ENCODE measurements at regions of chr3 and their contacts with region 1.

Region 1: GRCh38 chr3:196047391-196048030 is 34.4 kb downstream of the TFRC start:
- DNase-seq: no peak
- ATAC-seq: no peak
- H3K4me3 ChIP-seq: no peak overlapping the region
- H3K27ac ChIP-seq: no peak overlapping the region
- H3K4me1 ChIP-seq: no peaks in the 10 kb centered on the region
- H3K27me3 ChIP-seq: no peaks in the 10 kb centered on the region
- CTCF ChIP-seq: no peak

Region 2: GRCh38 chr3:195558602-195559001 is 488.9 kb before region 1 on chr3:
- CTCF ChIA-PET with region 1: no interaction called
- POLR2A ChIA-PET with region 1: no interaction called
- in situ Hi-C with region 1: no loop called
- intact Hi-C with region 1: no loop called
- DNase-seq: no peak
- ATAC-seq: peak; percentile 82
- H3K4me3 ChIP-seq: no peak overlapping the region
- H3K27ac ChIP-seq: no peak overlapping the region
- H3K4me1 ChIP-seq: peaks cover 4% of the 10 kb centered on the region; the same call in 1 of the 2 replicates
- H3K27me3 ChIP-seq: no peaks in the 10 kb centered on the region
- CTCF ChIP-seq: peak; percentile 78

Region 3: GRCh38 chr3:196063456-196063855 is 15.9 kb after region 1 on chr3:
- CTCF ChIA-PET with region 1: no interaction called
- POLR2A ChIA-PET with region 1: interaction called, 12 read pairs
- in situ Hi-C with region 1: no loop called
- intact Hi-C with region 1: no loop called
- DNase-seq: no peak
- ATAC-seq: no peak
- H3K4me3 ChIP-seq: no peak overlapping the region
- H3K27ac ChIP-seq: no peak overlapping the region
- H3K4me1 ChIP-seq: no peaks in the 10 kb centered on the region
- H3K27me3 ChIP-seq: no peaks in the 10 kb centered on the region
- CTCF ChIP-seq: no peak

Region 4: DNA sequence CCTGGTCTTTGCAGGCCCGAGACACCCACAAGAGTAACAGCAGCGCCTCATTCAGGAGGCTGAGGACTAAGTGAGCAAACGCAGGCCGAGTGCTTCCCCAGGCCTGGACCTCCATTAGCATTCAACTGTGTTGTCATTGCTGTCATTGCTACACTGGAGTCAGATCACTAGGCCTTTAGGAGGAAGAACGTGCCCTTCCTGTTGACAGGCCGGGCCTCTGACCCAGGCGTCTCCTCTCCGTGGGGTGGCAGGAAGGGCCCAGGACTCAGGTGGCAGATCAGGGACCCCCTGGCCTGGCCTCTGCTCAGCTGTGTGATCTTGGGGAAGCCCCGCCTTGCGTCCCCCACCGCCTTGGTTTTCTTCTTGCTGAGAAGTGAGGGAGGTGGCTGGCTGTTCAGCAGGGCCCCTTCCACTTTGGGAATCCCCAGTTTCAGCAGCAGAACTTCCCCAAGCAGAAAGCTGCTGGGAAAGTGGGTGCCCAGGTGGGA is 144.6 kb after region 1 on chr3:
- CTCF ChIA-PET with region 1: interaction called, 3 read pairs
- POLR2A ChIA-PET with region 1: interaction called, 16 read pairs
- in situ Hi-C with region 1: no loop called
- intact Hi-C with region 1: no loop called
- DNase-seq: no peak
- ATAC-seq: no peak
- H3K4me3 ChIP-seq: no peak overlapping the region
- H3K27ac ChIP-seq: no peak overlapping the region
- H3K4me1 ChIP-seq: peaks cover 11% of the 10 kb centered on the region; the same call in 1 of the 2 replicates
- H3K27me3 ChIP-seq: no peaks in the 10 kb centered on the region
- CTCF ChIP-seq: no peak

Measured in Panc1 (cell line).